Naive thymus-derived CD4-positive, alpha-beta T cell (primary cell): ENCODE measurements at regions of chr11 and their contacts with region 1.

Region 1: DNA sequence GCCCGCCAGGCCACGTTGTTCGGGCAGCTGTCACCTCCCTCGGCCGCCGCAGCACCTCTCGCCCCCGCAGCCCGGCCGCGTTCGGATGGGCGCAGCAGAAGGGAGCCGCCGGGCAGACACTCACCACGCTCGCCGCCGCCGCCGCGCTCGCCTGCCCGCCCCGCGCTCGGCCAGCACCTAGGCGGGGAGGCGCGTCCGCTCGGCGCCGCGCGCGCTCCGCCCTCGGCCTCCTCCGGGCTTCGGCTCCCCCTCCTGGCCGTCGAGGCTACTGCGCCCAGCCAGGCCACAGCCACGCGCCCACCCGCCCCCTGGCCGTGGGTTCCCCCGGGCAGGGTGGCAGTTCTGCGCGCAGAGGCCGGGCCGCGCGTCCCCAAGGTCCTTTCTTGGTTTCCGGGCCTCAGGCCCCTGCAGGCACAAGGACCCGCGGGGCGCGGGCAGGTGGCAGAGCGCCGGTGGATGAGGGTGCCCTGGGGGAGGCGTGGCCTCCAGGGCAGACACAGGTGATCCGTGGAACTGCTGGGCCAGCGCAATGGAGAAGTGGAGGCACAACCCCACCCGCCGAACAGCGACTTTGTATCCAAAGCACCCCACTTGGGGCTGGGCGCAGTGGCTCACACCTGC is at the start of gene SLC25A22:
- DNase-seq: peak; percentile 66 to 93 (median 83)
- ATAC-seq: peak; percentile 82
- H3K4me3 ChIP-seq: peak within 1 kb of the TSS; percentile 87
- H3K4me3 Mint-ChIP-seq: peak within 1 kb of the TSS; percentile 84 to 99 (median 90)
- H3K27ac ChIP-seq: peak within 1 kb of the TSS; percentile 93
- H3K27ac Mint-ChIP-seq: peak within 1 kb of the TSS; percentile 61 to 94 (median 92)
- H3K4me1 ChIP-seq: peaks cover 14 to 16% of the 10 kb centered on the region in 2 donors
- H3K4me1 Mint-ChIP-seq: peaks cover 0 to 15% (median 12%) of the 10 kb centered on the region in 7 donors
- H3K27me3 ChIP-seq: no peaks in the 10 kb centered on the region
- H3K27me3 Mint-ChIP-seq: no peaks in the 10 kb centered on the region
- total RNA-seq, gene SLC25A22: 17.4 to 58.4 (median 21.3) TPM

Region 2: GRCh38 chr11:416757-417621 is 381.2 kb before region 1 on chr11:
- CTCF ChIA-PET with region 1: no interaction called
- POLR2A ChIA-PET with region 1: no interaction called
- intact Hi-C with region 1: loop called in 1 of 2 experiments (anchors 10 kb)
- DNase-seq: peak; percentile 34 to 71 (median 47)
- ATAC-seq: peak; percentile 38
- H3K4me3 ChIP-seq: peak overlapping the region; percentile 92
- H3K4me3 Mint-ChIP-seq: peak overlapping the region; percentile 48 to 100 (median 96)
- H3K27ac ChIP-seq: peak overlapping the region; percentile 75
- H3K27ac Mint-ChIP-seq: peak overlapping the region in 4 of 9 donors; percentile 68 to 78 (median 70)
- H3K4me1 ChIP-seq: peaks cover 11 to 21% of the 10 kb centered on the region in 2 donors
- H3K4me1 Mint-ChIP-seq: peaks cover 10 to 37% (median 17%) of the 10 kb centered on the region in 7 donors
- H3K27me3 ChIP-seq: no peaks in the 10 kb centered on the region
- H3K27me3 Mint-ChIP-seq: no peaks in the 10 kb centered on the region

Region 3: DNA sequence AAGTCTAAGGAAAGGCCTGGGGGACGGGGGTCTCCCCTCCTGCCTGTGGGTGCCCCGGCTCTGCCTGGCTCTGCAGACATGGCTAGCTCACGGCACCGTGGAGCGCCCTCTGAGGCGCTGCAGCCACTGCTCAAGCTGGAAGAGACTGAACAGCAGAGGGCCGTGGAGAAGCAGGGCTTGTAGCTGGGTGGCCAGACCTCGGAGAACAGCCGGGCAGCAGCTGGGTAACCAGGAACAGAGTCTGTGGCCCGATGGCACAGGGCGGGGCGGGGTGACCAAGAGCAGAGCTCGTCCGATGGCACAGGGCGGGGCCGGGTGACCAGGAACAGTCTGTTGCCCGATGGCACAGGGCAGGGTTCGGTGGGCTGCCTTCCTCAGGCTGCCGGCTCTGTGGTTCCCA is 309.2 kb before region 1 on chr11:
- CTCF ChIA-PET with region 1: no interaction called
- POLR2A ChIA-PET with region 1: no interaction called
- intact Hi-C with region 1: no loop called
- DNase-seq: no peak
- ATAC-seq: no peak
- H3K4me3 ChIP-seq: no peak overlapping the region
- H3K4me3 Mint-ChIP-seq: no peak overlapping the region
- H3K27ac ChIP-seq: no peak overlapping the region
- H3K27ac Mint-ChIP-seq: no peak overlapping the region
- H3K4me1 ChIP-seq: no peaks in the 10 kb centered on the region
- H3K4me1 Mint-ChIP-seq: no peaks in the 10 kb centered on the region
- H3K27me3 ChIP-seq: no peaks in the 10 kb centered on the region
- H3K27me3 Mint-ChIP-seq: no peaks in the 10 kb centered on the region

Region 4: DNA sequence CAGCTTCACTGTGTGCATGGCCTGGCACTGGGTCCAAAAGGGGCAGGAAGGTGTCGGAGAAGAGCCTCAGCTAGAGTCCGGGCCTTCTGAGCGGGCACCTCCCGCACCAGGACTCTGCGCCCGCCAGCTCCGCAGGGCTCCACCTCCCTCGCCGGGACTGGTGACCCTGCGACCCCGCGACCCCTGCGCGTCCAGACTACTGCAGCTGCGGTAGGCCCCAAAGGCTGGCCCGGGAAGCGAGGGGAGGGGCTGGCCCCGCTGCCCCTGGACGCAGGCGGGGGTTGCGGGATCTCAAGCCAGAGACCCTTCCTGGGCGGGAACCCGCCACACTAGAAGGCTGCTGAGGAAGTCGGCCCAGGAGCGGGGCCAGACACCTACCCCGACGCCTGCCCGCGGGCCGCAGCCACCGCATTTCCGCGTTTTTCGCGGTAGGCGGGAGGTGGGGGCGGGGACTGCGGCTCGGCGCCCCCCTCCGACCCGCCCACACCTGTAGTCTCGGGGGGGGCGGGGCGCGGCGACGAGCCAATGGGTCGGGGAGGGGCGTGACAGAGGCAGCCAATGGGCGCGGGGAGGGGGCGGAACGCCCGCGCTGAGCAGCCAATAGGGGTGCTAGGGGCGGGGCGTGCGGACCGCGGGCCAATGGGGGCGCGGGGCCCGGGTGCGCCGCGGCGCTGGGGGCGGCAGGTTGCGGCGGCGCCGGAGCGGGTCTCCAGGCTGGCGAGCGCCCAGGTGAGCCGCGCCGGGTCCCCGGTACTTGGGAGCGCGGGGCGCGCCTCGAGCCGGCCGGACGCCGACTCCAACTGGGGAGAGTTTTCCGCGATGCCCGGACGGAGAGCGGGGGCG is 237.7 kb before region 1 on chr11 and contains the starts of genes LMNTD2 and RASSF7:
- CTCF ChIA-PET with region 1: no interaction called
- POLR2A ChIA-PET with region 1: interaction called, 3 read pairs
- intact Hi-C with region 1: loop called (anchors 2 to 10 kb)
- DNase-seq: peak; percentile 89 to 98 (median 94)
- ATAC-seq: peak; percentile 98
- H3K4me3 ChIP-seq: peak within 1 kb of the TSS; percentile 68
- H3K4me3 Mint-ChIP-seq: peak within 1 kb of the TSS; percentile 78 to 94 (median 89)
- H3K27ac ChIP-seq: peak within 1 kb of the TSS; percentile 82
- H3K27ac Mint-ChIP-seq: peak within 1 kb of the TSS; percentile 35 to 93 (median 84)
- H3K4me1 ChIP-seq: peaks cover 14 to 17% of the 10 kb centered on the region in 2 donors
- H3K4me1 Mint-ChIP-seq: peaks cover 4 to 17% (median 9%) of the 10 kb centered on the region in 7 donors
- H3K27me3 ChIP-seq: no peaks in the 10 kb centered on the region
- H3K27me3 Mint-ChIP-seq: peaks cover 0 to 18% (median 0%) of the 10 kb centered on the region in 5 donors
- total RNA-seq, gene LMNTD2: 2.8 to 14.7 (median 9.6) TPM
- total RNA-seq, gene RASSF7: 20.0 to 45.4 (median 35.5) TPM

Region 5: DNA sequence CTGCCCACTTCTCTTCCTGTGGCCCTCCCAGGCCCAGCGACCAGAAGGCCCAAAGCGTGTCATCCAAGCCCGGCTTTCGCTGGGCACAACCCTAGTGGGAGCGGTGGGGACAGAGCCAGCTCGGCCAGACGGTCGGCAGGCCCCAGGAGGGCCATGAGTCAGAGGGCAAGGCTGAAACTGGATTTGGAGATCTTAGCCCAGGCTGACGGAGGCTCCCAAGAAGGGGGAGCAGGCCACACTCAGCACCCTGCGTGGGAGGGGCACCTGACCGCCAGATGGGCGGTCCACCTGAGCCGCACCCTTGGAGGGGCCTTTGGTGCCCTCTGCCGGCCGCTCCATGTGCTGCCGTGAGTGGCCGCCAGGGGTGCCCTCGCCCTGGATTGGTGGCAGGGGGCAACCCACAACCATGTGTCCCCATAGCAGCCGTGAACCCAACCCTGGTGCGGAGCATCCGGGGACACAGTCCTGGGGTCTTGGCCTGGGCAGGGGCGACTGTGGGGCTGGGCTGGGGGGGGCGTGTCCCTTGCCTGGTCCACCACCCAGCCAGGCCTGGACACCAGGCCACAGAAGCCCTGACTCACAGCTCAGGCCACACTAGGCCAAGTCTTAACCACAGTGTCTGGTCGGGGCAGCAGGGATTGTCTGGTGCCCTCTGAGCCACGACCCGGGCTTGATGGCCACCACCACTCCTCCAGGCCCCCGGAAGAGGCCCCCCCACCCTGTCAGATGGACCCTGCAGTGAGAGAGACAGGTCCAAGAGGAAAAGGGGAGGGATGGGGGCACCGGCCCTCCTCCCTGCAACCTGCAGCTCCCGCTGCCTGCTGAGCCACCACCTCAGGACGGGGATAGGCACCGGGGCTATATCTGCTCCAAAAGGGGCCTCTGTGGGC is 70.1 kb before region 1 on chr11:
- CTCF ChIA-PET with region 1: no interaction called
- POLR2A ChIA-PET with region 1: no interaction called
- intact Hi-C with region 1: loop called (anchors 1 to 5 kb)
- DNase-seq: peak; percentile 52 to 86 (median 71)
- ATAC-seq: peak; percentile 93
- H3K4me3 ChIP-seq: no peak overlapping the region
- H3K4me3 Mint-ChIP-seq: no peak overlapping the region
- H3K27ac ChIP-seq: no peak overlapping the region
- H3K27ac Mint-ChIP-seq: no peak overlapping the region
- H3K4me1 ChIP-seq: peaks cover 11 to 17% of the 10 kb centered on the region in 2 donors
- H3K4me1 Mint-ChIP-seq: peaks cover 4 to 11% (median 8%) of the 10 kb centered on the region in 7 donors
- H3K27me3 ChIP-seq: no peaks in the 10 kb centered on the region
- H3K27me3 Mint-ChIP-seq: peaks cover 0 to 8% (median 4%) of the 10 kb centered on the region in 5 donors

Region 6: DNA sequence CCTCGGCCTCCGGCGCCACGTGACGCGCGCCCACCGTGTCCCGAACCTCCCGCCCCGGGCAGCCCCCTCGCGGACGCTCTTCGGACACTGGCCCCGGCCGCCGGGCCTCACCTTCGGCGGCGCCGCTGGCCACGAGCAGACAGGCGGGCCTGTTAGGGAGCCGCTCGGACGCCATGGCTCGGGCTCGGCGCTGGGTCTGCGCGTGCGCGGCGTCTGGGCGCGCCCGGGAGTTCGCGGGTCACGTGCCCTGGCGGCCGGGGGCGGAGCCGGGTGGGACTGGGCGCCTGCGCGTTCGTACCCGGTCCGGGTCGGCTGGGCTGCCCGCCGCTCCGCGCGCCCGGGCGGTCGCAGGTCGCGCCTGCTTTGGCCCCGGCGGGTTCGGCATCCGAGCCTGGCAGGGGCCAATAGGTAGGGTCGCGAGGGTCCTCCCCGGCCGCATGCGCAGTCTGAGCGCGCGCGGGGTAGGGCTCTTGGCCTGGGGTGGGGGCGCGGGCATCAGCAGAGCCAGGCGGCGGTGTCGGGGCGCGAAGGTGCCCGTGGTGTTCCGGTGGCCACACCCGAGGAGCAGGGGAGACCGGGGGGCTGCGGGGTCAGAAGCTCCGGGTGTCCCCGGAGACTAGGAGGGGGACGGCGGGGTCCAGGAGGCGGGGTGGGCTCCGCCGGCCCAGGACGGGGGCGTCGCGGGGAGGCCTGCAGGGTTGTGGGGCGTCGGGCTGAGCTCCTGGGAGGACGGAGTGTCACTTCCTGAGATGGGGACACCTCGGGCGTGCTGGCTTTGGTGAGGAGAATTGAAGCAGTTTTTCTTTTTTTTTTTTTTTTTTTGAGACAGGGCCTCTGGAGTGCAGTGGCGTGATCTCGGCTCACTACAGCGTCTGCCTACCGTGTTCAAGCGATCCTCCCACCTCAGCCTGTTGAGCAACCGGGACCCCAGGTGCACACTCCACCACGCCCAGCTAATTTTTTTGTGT is 20.6 kb before region 1 on chr11 and contains the start of gene GATD1:
- CTCF ChIA-PET with region 1: interaction called, 3 read pairs
- POLR2A ChIA-PET with region 1: interaction called, 18 read pairs
- intact Hi-C with region 1: loop called (anchors 1 kb)
- DNase-seq: peak; percentile 86 to 99 (median 93)
- ATAC-seq: peak; percentile 93
- H3K4me3 ChIP-seq: peak within 1 kb of the TSS; percentile 59
- H3K4me3 Mint-ChIP-seq: peak within 1 kb of the TSS; percentile 72 to 91 (median 83)
- H3K27ac ChIP-seq: peak within 1 kb of the TSS; percentile 85
- H3K27ac Mint-ChIP-seq: peak within 1 kb of the TSS; percentile 40 to 92 (median 78)
- H3K4me1 ChIP-seq: peaks cover 12 to 14% of the 10 kb centered on the region in 2 donors
- H3K4me1 Mint-ChIP-seq: peaks cover 7 to 29% (median 23%) of the 10 kb centered on the region in 7 donors
- H3K27me3 ChIP-seq: no peaks in the 10 kb centered on the region
- H3K27me3 Mint-ChIP-seq: no peaks in the 10 kb centered on the region
- total RNA-seq, gene GATD1: 37.8 to 59.2 (median 52.9) TPM

Region 7: DNA sequence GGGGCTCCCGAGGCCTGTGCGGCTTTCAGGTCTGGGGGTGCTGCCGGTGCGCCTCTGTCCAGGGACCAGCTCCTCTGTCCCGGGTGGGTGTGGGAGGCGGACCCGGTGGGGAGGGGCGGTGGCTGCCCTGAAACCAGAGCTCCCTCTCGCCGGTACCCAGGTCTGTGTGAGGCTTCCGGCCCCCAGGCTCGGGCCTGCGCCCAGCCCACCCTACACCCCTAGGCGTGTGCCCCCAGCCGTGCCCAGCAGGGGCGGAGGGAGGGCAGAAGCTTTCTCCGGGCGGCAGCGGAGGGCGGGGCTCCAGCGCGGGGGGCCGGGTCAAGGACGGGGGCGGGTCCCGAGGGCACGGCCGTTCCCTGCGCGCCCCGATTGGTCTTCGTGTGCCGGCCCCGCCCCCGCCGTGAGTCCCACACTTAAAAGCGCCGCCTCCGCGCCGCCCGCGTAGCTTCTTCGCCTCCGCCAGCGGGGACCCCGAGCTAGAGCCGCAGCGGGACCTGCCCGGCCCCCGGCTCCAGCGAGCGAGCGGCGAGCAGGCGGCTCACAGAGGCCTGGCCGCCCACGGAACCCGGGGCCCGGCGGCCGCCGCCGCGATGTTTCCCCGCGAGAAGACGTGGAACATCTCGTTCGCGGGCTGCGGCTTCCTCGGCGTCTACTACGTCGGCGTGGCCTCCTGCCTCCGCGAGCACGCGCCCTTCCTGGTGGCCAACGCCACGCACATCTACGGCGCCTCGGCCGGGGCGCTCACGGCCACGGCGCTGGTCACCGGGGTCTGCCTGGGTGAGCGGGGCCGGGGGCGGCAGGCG is 21.1 kb after region 1 on chr11:
- CTCF ChIA-PET with region 1: no interaction called
- POLR2A ChIA-PET with region 1: interaction called, 66 read pairs
- intact Hi-C with region 1: loop called in 1 of 2 experiments (anchors 1 kb)
- DNase-seq: peak; percentile 85 to 95 (median 92)
- ATAC-seq: peak; percentile 86
- H3K4me3 ChIP-seq: peak overlapping the region; percentile 86
- H3K4me3 Mint-ChIP-seq: peak overlapping the region; percentile 82 to 92 (median 86)
- H3K27ac ChIP-seq: peak overlapping the region; percentile 91
- H3K27ac Mint-ChIP-seq: peak overlapping the region in 7 of 9 donors; percentile 67 to 93 (median 86)
- H3K4me1 ChIP-seq: peaks cover 12 to 15% of the 10 kb centered on the region in 2 donors
- H3K4me1 Mint-ChIP-seq: peaks cover 0 to 24% (median 13%) of the 10 kb centered on the region in 7 donors
- H3K27me3 ChIP-seq: no peaks in the 10 kb centered on the region
- H3K27me3 Mint-ChIP-seq: no peaks in the 10 kb centered on the region

Region 8: GRCh38 chr11:917426-917825 is 119.2 kb after region 1 on chr11:
- CTCF ChIA-PET with region 1: no interaction called
- POLR2A ChIA-PET with region 1: no interaction called
- intact Hi-C with region 1: no loop called
- DNase-seq: no peak
- ATAC-seq: no peak
- H3K4me3 ChIP-seq: no peak overlapping the region
- H3K4me3 Mint-ChIP-seq: no peak overlapping the region
- H3K27ac ChIP-seq: no peak overlapping the region
- H3K27ac Mint-ChIP-seq: no peak overlapping the region
- H3K4me1 ChIP-seq: no peaks in the 10 kb centered on the region
- H3K4me1 Mint-ChIP-seq: peaks cover 0 to 4% (median 0%) of the 10 kb centered on the region in 7 donors
- H3K27me3 ChIP-seq: no peaks in the 10 kb centered on the region
- H3K27me3 Mint-ChIP-seq: no peaks in the 10 kb centered on the region